ENCODE measurements at regions of chr10 and their contacts with region 1.

Region 1: DNA sequence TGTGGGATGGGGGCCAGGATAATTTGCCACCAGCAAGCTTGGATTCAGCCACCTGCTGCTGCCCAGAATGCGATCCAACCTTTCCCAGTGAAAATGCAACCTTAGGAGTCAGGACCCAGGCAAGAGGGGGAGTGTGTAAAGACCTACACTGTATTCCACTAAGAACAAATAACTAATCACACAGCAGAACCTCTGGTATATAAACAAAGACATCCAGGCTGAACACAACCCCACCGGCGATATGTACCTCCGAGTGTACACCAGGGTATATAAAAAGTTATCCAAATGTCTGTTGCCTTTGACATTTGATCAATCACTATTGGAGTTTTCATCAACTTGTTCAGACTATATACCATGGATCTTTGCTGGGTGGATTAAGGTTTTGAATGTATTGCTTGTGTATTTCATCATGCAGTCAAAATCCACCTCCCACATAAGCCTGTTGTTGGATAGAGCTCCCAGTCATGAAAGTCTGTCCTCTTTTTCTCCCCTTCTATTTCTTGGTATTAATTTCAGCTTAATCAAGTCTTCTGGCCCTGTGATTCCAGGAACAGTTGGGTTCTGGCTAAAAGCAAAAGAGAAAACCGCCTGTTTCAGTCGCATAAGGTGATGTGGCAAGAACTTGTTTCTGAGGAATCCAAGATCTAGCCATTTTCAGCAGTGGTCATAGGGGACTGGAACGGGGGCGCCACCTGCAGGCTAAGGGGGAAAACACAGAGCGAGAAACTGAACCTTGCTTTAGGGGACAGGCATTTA is 290.7 kb downstream of the CCDC3 start:
- DNase-seq: peak; percentile 74 to 90
- H3K4me3 ChIP-seq: no peak overlapping the region
- H3K4me3 Mint-ChIP-seq: peak overlapping the region; percentile 17
- H3K27ac Mint-ChIP-seq: peak overlapping the region; percentile 91
- H3K4me1 ChIP-seq: peaks cover 26% of the 10 kb centered on the region
- H3K4me1 Mint-ChIP-seq: peaks cover 34% of the 10 kb centered on the region
- H3K27me3 ChIP-seq: no peaks in the 10 kb centered on the region
- H3K27me3 Mint-ChIP-seq: no peaks in the 10 kb centered on the region
- CTCF ChIP-seq: peak; percentile 96 to 99

Region 2: DNA sequence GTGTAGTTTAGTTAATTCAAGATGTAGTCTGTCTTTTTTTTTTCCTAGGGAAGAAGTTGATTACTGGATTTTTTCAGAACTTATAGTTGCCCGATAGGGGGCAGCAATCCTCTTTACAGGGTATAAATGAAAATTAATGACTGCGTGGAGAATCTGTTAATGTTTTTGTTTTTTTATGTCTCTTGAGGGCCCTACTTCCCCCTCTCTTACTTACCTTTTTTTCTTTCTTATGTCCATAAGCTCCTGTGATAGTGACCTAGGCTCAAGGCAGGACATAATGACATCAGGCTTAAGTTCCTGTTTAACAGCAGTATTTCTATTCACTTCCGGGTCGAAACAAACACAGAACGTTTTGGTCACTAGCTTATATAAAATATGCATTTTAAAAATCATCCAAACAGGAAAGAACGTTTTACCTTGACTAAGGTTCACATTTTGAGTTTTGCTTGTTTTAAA is 496.0 kb before region 1 on chr10:
- CTCF ChIA-PET with region 1: interaction called, 3 read pairs
- POLR2A ChIA-PET with region 1: no interaction called
- intact Hi-C with region 1: loop called (anchors 5 kb)
- DNase-seq: peak in 1 of 2 experiments; percentile 68
- H3K4me3 ChIP-seq: no peak overlapping the region
- H3K4me3 Mint-ChIP-seq: no peak overlapping the region
- H3K27ac Mint-ChIP-seq: no peak overlapping the region
- H3K4me1 ChIP-seq: no peaks in the 10 kb centered on the region
- H3K4me1 Mint-ChIP-seq: no peaks in the 10 kb centered on the region
- H3K27me3 ChIP-seq: no peaks in the 10 kb centered on the region
- H3K27me3 Mint-ChIP-seq: no peaks in the 10 kb centered on the region
- CTCF ChIP-seq: peak; percentile 79 to 84

Region 3: DNA sequence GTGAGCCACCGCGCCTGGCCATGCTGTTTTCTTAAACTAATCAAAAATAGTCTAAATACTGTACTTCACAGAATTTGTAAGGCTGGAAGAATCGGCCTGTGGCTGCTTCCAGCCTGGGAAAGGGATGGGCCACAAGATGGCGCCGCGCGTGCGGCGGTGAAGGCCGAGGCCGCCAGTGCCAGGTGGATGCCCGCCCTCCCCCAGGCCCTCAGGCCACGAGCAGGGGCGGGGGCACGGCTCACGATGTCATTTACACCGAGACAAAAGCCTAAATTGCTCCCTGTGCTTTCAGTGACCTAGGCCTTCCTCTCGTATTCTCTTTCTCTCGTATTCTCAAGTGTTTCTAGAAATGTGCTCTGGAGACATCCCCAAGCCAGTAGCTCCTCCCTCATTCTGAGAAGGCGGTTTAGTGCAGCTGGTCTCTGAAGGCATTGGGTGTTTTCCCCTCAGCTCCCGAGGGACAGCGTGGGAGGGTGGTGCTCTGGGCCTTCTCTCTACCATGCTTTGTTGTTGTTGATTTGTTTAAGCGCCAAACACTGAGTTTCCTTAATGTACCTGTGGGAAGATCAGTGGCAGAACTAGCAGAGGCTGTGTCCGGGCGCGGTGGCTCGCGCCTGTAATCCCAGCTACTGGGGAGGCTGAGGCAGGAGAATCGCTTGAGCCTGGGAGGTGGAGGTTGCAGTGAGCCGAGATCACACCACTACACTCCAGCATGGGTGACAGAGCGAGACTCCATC is 446.4 kb before region 1 on chr10:
- CTCF ChIA-PET with region 1: interaction called, 5 read pairs
- POLR2A ChIA-PET with region 1: no interaction called
- intact Hi-C with region 1: loop called (anchors 1 kb)
- DNase-seq: peak; percentile 82 to 91
- H3K4me3 ChIP-seq: peak overlapping the region; percentile 39
- H3K4me3 Mint-ChIP-seq: peak overlapping the region; percentile 73
- H3K27ac Mint-ChIP-seq: peak overlapping the region; percentile 48
- H3K4me1 ChIP-seq: peaks cover 20% of the 10 kb centered on the region
- H3K4me1 Mint-ChIP-seq: peaks cover 18% of the 10 kb centered on the region
- H3K27me3 ChIP-seq: no peaks in the 10 kb centered on the region
- H3K27me3 Mint-ChIP-seq: no peaks in the 10 kb centered on the region
- CTCF ChIP-seq: peak; percentile 91 to 92

Region 4: GRCh38 chr10:12902135-12902572 is 191.4 kb after region 1 on chr10:
- CTCF ChIA-PET with region 1: interaction called, 7 read pairs
- POLR2A ChIA-PET with region 1: no interaction called
- intact Hi-C with region 1: loop called (anchors 1 kb)
- DNase-seq: peak; percentile 65 to 77
- H3K4me3 ChIP-seq: no peak overlapping the region
- H3K4me3 Mint-ChIP-seq: no peak overlapping the region
- H3K27ac Mint-ChIP-seq: no peak overlapping the region
- H3K4me1 ChIP-seq: no peaks in the 10 kb centered on the region
- H3K4me1 Mint-ChIP-seq: no peaks in the 10 kb centered on the region
- H3K27me3 ChIP-seq: no peaks in the 10 kb centered on the region
- H3K27me3 Mint-ChIP-seq: peaks cover 4% of the 10 kb centered on the region
- CTCF ChIP-seq: peak; percentile 82 to 91

Region 5: DNA sequence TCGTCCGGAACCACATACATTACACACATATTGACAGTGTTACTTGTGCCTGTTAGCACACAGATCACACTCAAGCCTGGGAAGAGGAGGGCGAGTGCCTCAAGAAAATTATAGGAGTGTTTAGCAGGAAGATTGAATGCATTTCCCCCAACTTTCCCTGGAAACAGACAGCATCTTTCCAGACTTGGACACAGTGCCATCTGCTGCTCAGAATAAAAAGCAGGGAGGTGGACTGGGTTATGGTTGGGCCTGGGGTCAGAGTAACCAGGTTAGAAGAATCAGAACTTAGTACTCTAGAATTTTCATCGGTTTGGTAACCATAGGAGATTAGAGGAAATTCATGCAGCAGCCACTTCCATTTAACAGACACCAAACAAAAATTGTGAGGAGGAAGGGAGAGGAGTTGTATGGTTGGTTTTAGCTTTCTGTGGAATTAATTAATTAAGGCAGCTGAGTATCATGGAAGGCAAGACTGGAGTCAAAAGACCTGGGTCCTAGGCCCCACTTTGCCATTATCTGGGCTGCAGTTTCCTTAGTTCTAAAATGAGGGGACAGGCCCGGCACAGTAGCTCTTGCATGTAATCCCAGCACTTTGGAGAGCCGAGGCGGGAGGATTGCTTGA is 345.8 kb after region 1 on chr10:
- CTCF ChIA-PET with region 1: no interaction called
- POLR2A ChIA-PET with region 1: no interaction called
- intact Hi-C with region 1: loop called (anchors 1 kb)
- DNase-seq: peak in 1 of 2 experiments; percentile 62
- H3K4me3 ChIP-seq: no peak overlapping the region
- H3K4me3 Mint-ChIP-seq: no peak overlapping the region
- H3K27ac Mint-ChIP-seq: no peak overlapping the region
- H3K4me1 ChIP-seq: no peaks in the 10 kb centered on the region
- H3K4me1 Mint-ChIP-seq: no peaks in the 10 kb centered on the region
- H3K27me3 ChIP-seq: no peaks in the 10 kb centered on the region
- H3K27me3 Mint-ChIP-seq: no peaks in the 10 kb centered on the region
- CTCF ChIP-seq: peak; percentile 64 to 88

Measured in Caco-2 (cell line).